ENCODE measurements at regions of chr6 and their contacts with region 1.

Region 1: GRCh38 chr6:2209226-2209809 is 36.1 kb downstream of the GMDS start:
- DNase-seq: peak; percentile 50 to 76
- H3K4me3 ChIP-seq: no peak overlapping the region
- H3K27ac ChIP-seq: no peak overlapping the region
- H3K4me1 ChIP-seq: peaks cover 0 to 3% (median 1%) of the 10 kb centered on the region in 4 experiments; a peak in 2 of 7 replicates
- H3K27me3 ChIP-seq: no peaks in the 10 kb centered on the region
- CTCF ChIP-seq: peak; percentile 88 to 94 (median 92)
- EP300 ChIP-seq: no peak
- POLR2A ChIP-seq: no peak
- RAD21 ChIP-seq: peak; percentile 78 to 86

Region 2: DNA sequence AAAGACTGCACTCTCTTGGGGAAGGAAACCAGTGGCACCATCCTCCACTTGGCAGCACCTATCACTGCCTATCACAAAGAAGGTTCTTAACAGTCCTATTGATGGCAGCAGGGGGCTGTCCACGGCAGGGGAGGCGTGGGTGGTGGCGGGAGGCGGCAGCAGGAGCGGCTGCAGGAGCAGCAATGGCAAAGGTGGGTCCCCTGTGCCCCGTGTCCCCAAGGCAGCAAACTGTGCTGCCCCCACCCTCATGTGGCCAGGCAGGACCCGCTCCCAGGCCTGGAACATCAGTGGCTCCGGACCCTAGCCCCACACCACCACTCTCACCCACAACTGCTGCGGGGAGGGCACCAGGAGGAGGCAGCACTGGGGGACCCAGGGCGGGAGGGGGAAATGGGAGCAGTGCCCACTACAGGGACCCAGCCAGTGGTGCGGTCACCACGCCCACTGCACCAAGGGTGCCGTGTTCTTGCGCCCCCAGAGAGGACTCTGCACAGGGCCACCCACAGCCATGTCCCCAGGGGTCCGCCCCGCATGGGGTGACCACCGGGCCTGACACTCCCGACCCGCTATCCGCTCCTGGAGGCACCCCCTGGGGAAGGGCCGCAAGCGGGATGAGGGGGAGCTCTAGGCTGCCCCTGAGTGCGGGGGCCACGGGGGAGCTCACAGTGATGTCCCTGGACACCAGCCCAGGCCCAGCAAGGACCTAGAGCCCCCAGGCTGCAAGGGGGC is 18.5 kb before region 1 on chr6:
- CTCF ChIA-PET with region 1: interaction called, 14 read pairs
- POLR2A ChIA-PET with region 1: interaction called, 3 read pairs
- DNase-seq: no peak
- H3K4me3 ChIP-seq: no peak overlapping the region
- H3K27ac ChIP-seq: no peak overlapping the region
- H3K4me1 ChIP-seq: no peaks in the 10 kb centered on the region
- H3K27me3 ChIP-seq: no peaks in the 10 kb centered on the region
- CTCF ChIP-seq: peak in 2 of 3 experiments; percentile 8 to 51; a peak in 3 of 4 replicates
- EP300 ChIP-seq: no peak
- POLR2A ChIP-seq: no peak
- RAD21 ChIP-seq: no peak; a peak in 1 of 4 replicates

Region 3: GRCh38 chr6:2225422-2226392 is 16.4 kb after region 1 on chr6:
- CTCF ChIA-PET with region 1: interaction called, 17 read pairs
- POLR2A ChIA-PET with region 1: interaction called, 3 read pairs
- DNase-seq: no peak
- H3K4me3 ChIP-seq: no peak overlapping the region
- H3K27ac ChIP-seq: no peak overlapping the region
- H3K4me1 ChIP-seq: peaks cover 3 to 10% (median 5%) of the 10 kb centered on the region in 4 experiments; a peak in 5 of 7 replicates
- H3K27me3 ChIP-seq: no peaks in the 10 kb centered on the region
- CTCF ChIP-seq: no peak
- EP300 ChIP-seq: no peak
- POLR2A ChIP-seq: no peak
- RAD21 ChIP-seq: no peak

Region 4: GRCh38 chr6:2346078-2346477 is 136.8 kb after region 1 on chr6:
- CTCF ChIA-PET with region 1: interaction called, 14 read pairs
- POLR2A ChIA-PET with region 1: no interaction called
- DNase-seq: no peak
- H3K4me3 ChIP-seq: no peak overlapping the region
- H3K27ac ChIP-seq: no peak overlapping the region
- H3K4me1 ChIP-seq: no peaks in the 10 kb centered on the region
- H3K27me3 ChIP-seq: no peaks in the 10 kb centered on the region
- CTCF ChIP-seq: no peak
- EP300 ChIP-seq: no peak
- POLR2A ChIP-seq: no peak
- RAD21 ChIP-seq: no peak

Region 5: GRCh38 chr6:2363211-2363610 is 153.9 kb after region 1 on chr6:
- CTCF ChIA-PET with region 1: interaction called, 21 read pairs
- POLR2A ChIA-PET with region 1: no interaction called
- DNase-seq: no peak
- H3K4me3 ChIP-seq: no peak overlapping the region
- H3K27ac ChIP-seq: no peak overlapping the region
- H3K4me1 ChIP-seq: no peaks in the 10 kb centered on the region
- H3K27me3 ChIP-seq: no peaks in the 10 kb centered on the region
- CTCF ChIP-seq: no peak
- EP300 ChIP-seq: no peak
- POLR2A ChIP-seq: no peak
- RAD21 ChIP-seq: no peak

Measured in H1 (cell line).